B cell (primary cell): ENCODE measurements at regions of chr14 and their contacts with region 1.

Region 1: GRCh38 chr14:91836119-91836881 is 31.0 kb downstream of the TC2N start:
- DNase-seq: peak; percentile 91
- ATAC-seq: peak; percentile 93
- H3K4me3 ChIP-seq: peak overlapping the region; percentile 47 to 77 (median 58)
- H3K4me3 Mint-ChIP-seq: peak overlapping the region; percentile 92
- H3K27ac ChIP-seq: peak overlapping the region in 1 of 2 donors; percentile 45
- H3K27ac Mint-ChIP-seq: peak overlapping the region; percentile 77
- H3K4me1 ChIP-seq: peaks cover 30 to 35% of the 10 kb centered on the region in 2 donors
- H3K4me1 Mint-ChIP-seq: peaks cover 37% of the 10 kb centered on the region
- H3K27me3 ChIP-seq: peaks cover 0 to 31% (median 3%) of the 10 kb centered on the region in 4 experiments
- H3K27me3 Mint-ChIP-seq: peaks cover 12% of the 10 kb centered on the region
- CTCF ChIP-seq: peak; percentile 25

Region 2: GRCh38 chr14:91510174-91511042 is 325.9 kb before region 1 on chr14 and contains the start of gene PPP4R3A:
- CTCF ChIA-PET with region 1: no interaction called
- POLR2A ChIA-PET with region 1: no interaction called
- intact Hi-C with region 1: loop called (anchors 10 kb)
- DNase-seq: peak; percentile 97
- ATAC-seq: peak; percentile 87
- H3K4me3 ChIP-seq: peak within 1 kb of the TSS; percentile 72 to 99 (median 84)
- H3K4me3 Mint-ChIP-seq: peak within 1 kb of the TSS; percentile 99
- H3K27ac ChIP-seq: peak within 1 kb of the TSS; percentile 97 to 100
- H3K27ac Mint-ChIP-seq: peak within 1 kb of the TSS; percentile 100
- H3K4me1 ChIP-seq: peaks cover 32% of the 10 kb centered on the region in 2 donors
- H3K4me1 Mint-ChIP-seq: peaks cover 37% of the 10 kb centered on the region
- H3K27me3 ChIP-seq: no peaks in the 10 kb centered on the region
- H3K27me3 Mint-ChIP-seq: no peaks in the 10 kb centered on the region
- CTCF ChIP-seq: no peak
- total RNA-seq, gene PPP4R3A: 184 and 189 TPM in 2 replicates

Region 3: DNA sequence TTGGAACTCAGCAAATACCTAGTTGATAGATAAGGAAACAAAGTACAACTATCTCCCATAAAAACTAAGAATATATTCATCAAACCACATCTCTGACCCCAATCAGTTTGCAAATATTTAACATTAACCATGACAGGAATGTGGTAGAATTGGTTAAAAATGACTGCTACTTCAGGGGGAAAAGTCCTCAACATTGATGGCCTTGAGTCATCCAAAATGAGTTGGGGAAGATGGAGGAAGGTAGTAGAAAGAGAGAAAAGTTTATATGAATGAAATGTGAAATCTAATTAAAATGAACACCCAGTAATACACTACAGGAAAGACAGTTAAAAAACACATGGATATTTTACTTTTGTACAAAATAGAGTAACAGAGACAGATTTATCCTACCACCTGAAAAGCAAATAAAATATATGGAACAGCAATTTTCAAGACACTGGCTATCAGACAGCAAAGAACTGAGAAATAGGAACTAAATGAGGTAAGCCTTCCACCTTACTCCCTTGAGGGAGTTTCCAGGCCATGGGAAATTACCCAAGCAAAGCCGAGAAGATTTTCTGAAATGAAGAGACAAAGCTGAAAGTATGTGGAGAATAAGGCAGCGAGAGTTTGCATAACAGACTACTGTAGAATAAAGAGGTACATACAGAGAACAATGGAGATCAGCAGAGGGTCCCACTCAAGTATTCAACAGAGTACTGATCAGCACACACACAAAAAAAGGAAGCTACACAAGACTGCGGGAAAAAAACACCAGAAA is 18.6 kb before region 1 on chr14:
- CTCF ChIA-PET with region 1: no interaction called
- POLR2A ChIA-PET with region 1: interaction called, 4 read pairs
- intact Hi-C with region 1: loop called (anchors 1 kb)
- DNase-seq: peak; percentile 78
- ATAC-seq: peak; percentile 93
- H3K4me3 ChIP-seq: peak overlapping the region in 1 of 5 experiments; percentile 8
- H3K4me3 Mint-ChIP-seq: peak overlapping the region; percentile 33
- H3K27ac ChIP-seq: peak overlapping the region; percentile 12 to 64
- H3K27ac Mint-ChIP-seq: peak overlapping the region; percentile 5
- H3K4me1 ChIP-seq: peaks cover 11 to 19% of the 10 kb centered on the region in 2 donors
- H3K4me1 Mint-ChIP-seq: peaks cover 17% of the 10 kb centered on the region
- H3K27me3 ChIP-seq: no peaks in the 10 kb centered on the region
- H3K27me3 Mint-ChIP-seq: peaks cover 11% of the 10 kb centered on the region
- CTCF ChIP-seq: no peak

Region 4: DNA sequence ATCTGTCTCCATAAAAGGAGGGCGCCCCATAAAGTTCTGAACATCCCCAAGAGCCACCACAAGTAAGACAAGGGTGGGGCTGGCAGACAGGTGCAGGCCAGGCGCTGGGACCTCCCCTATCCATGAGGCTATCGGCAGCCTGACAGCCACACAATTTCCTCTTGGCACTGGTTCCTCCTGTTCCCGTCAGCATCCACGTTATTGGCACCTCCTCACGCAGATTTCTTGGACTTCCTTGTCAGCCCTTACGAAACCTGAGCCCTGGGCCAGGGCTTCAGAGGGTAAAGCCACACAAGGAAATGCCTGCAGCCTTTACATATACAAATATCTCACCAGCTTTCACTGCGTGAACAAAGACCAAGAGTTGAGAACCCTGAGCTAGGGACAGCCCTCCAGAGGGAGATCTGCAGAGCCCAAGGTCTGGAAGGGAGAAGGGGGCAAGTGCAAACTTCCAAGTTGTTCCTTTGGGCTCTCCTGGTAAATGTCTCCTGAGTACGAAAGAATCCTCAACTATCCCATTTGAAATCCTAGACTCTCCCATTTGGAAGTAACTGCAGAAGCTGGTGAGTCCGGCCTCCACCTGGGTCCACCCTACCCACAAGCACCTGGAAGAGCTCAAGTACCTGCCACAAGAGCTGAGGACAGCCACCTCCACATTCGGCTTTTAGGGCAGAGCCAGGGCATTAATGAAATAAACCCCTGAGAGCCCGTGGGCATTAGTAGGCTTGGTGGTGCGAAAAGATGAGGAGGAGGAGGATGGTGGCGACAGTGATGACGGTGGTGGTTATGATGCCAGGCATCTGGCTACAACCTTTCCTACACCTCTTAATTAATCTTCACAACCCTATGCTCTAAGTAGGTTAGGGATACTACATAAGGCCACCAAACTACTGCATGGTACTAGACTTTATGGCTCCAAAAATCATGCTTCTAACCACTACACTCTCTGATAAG is 36.5 kb after region 1 on chr14:
- CTCF ChIA-PET with region 1: no interaction called
- POLR2A ChIA-PET with region 1: interaction called, 3 read pairs
- intact Hi-C with region 1: loop called (anchors 1 kb)
- DNase-seq: peak; percentile 62
- ATAC-seq: peak; percentile 6
- H3K4me3 ChIP-seq: peak overlapping the region in 3 of 5 experiments; percentile 10 to 49 (median 40)
- H3K4me3 Mint-ChIP-seq: peak overlapping the region; percentile 71
- H3K27ac ChIP-seq: peak overlapping the region; percentile 18 to 21
- H3K27ac Mint-ChIP-seq: peak overlapping the region; percentile 70
- H3K4me1 ChIP-seq: peaks cover 52 to 57% of the 10 kb centered on the region in 2 donors
- H3K4me1 Mint-ChIP-seq: peaks cover 56% of the 10 kb centered on the region
- H3K27me3 ChIP-seq: no peaks in the 10 kb centered on the region
- H3K27me3 Mint-ChIP-seq: no peaks in the 10 kb centered on the region
- CTCF ChIP-seq: no peak

Region 5: DNA sequence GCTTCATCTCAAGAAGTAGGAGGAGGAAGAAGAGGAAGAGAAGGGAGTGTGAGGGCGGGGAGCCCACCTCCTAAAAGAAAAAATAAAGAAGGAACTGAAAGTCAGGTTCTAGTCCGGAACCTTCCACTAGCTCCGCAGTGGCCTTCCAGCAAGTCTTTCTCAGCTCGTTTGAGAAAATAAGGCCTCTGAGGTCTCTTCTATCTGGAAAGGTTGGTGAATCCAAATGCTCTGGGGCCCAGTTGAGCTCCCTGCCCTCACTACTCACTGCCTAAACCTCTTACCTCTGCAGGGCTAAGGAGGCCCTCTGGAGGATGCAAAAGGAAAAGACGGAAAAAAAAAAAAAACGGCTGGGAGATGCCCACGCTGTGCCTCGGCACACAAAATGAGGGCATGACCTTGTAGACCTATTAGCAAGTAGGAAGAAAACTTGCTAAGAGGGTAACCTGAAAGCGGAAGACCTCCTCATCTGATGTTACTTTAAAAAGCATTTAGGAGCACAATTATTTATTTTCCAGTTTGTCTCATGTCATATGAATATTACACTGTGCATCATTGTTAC is 75.3 kb after region 1 on chr14:
- CTCF ChIA-PET with region 1: no interaction called
- POLR2A ChIA-PET with region 1: no interaction called
- intact Hi-C with region 1: loop called (anchors 2 kb)
- DNase-seq: peak; percentile 47
- ATAC-seq: peak; percentile 84
- H3K4me3 ChIP-seq: peak overlapping the region in 3 of 5 experiments; percentile 20 to 48 (median 25)
- H3K4me3 Mint-ChIP-seq: peak overlapping the region; percentile 66
- H3K27ac ChIP-seq: peak overlapping the region in 1 of 2 donors; percentile 76
- H3K27ac Mint-ChIP-seq: peak overlapping the region; percentile 82
- H3K4me1 ChIP-seq: peaks cover 12 to 14% of the 10 kb centered on the region in 2 donors
- H3K4me1 Mint-ChIP-seq: peaks cover 16% of the 10 kb centered on the region
- H3K27me3 ChIP-seq: peaks cover 0 to 6% (median 0%) of the 10 kb centered on the region in 4 experiments
- H3K27me3 Mint-ChIP-seq: peaks cover 20% of the 10 kb centered on the region
- CTCF ChIP-seq: no peak